Activated CD4-positive, alpha-beta T cell treated with anti-CD3 and anti-CD28 coated beads, Interleukin-2, amount 10 ng/mL, durations not matched to agents 7 days and 5 days (primary cell): ENCODE measurements at regions of chr10 and their contacts with region 1.

Region 1: GRCh38 chr10:102678842-102679289 is 34.6 kb downstream of the TRIM8 start:
- DNase-seq: no peak
- H3K4me3 Mint-ChIP-seq: no peak overlapping the region
- H3K27ac Mint-ChIP-seq: no peak overlapping the region
- H3K4me1 Mint-ChIP-seq: peaks cover 48% of the 10 kb centered on the region
- H3K27me3 Mint-ChIP-seq: no peaks in the 10 kb centered on the region

Region 2: DNA sequence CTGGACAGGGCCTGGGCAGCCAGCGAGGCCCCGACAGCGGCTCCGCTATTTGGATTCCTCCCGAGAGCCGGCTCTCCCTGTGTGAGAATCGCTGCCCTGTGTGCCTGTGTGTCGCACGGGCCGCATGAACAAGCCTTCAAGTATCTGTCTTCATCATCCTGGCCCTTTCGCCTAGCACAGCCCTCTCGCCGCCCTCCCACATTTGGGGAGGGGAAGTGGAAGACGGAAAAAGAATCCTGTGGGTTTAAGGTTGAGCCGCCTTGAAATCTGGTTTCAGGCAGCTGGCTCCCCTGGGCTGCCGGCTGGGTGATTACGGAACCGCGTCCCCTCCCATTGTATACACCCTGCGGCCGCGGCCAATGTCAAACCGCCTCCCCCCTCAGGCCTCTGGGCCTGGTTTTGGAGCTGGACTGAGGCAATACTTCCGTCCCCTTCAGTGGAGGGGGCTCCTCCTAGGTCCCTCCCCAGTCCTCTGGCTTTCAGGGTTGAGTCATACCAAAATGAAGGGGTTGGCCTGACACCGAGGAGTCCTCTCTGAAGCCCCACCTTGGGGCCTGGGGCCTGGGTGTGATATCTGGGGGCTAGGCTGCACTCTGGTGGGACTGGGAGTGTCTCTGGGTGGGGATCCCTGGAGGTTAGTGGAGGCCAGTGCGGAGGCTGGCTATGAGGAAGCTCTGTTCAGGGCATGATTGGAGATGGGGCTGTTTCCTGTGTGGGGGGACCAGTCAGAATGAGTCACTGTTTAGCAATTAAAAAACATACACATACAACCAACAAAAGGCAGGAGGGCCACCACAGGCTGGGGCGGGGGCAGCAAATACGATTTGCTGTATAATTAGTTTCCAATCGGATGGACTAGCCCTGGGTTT is 32.9 kb before region 1 on chr10:
- CTCF ChIA-PET with region 1: interaction called, 22 read pairs
- POLR2A ChIA-PET with region 1: no interaction called
- DNase-seq: peak; percentile 75
- H3K4me3 Mint-ChIP-seq: peak overlapping the region; percentile 94
- H3K27ac Mint-ChIP-seq: peak overlapping the region; percentile 95
- H3K4me1 Mint-ChIP-seq: peaks cover 55% of the 10 kb centered on the region
- H3K27me3 Mint-ChIP-seq: no peaks in the 10 kb centered on the region

Region 3: GRCh38 chr10:102660888-102661657 is 17.8 kb before region 1 on chr10:
- CTCF ChIA-PET with region 1: interaction called, 5 read pairs
- POLR2A ChIA-PET with region 1: interaction called, 14 read pairs
- DNase-seq: peak; percentile 70
- H3K4me3 Mint-ChIP-seq: peak overlapping the region; percentile 47
- H3K27ac Mint-ChIP-seq: peak overlapping the region; percentile 92
- H3K4me1 Mint-ChIP-seq: peaks cover 45% of the 10 kb centered on the region
- H3K27me3 Mint-ChIP-seq: no peaks in the 10 kb centered on the region

Region 4: GRCh38 chr10:102691285-102692066 is 12.6 kb after region 1 on chr10:
- CTCF ChIA-PET with region 1: interaction called, 10 read pairs
- POLR2A ChIA-PET with region 1: no interaction called
- DNase-seq: no peak
- H3K4me3 Mint-ChIP-seq: no peak overlapping the region
- H3K27ac Mint-ChIP-seq: no peak overlapping the region
- H3K4me1 Mint-ChIP-seq: no peaks in the 10 kb centered on the region
- H3K27me3 Mint-ChIP-seq: no peaks in the 10 kb centered on the region